ENCODE measurements at regions of chr2 and their contacts with region 1.

Region 1: DNA sequence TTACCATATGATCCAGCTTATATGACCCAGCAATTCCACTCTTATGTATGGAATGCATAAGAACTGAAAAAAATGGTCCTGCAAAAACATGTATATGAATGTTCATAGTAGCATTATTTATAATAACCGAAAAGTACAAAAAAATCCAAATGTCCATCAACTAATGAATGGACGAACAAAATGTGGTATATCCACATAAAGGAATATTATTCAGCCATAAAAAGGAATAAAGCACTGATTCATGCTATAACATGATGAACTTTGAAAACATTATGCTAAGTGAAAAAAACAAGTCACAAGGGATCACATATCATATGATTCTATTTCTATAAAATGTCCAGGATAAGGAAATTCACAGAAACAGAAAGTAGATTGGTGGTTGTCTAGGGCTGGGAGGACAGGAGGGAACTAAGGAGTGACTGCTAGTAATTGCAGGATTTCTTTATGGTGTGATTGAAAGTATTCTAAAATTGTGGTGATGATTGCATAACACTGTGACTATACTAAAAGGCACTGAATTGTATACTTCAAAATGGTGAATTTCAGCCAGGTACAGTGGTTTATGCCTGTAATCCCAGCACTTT is 10.0 kb upstream of the DIS3L2 start:
- DNase-seq: no peak
- H3K4me3 ChIP-seq: no peak overlapping the region
- CTCF ChIP-seq: no peak

Region 2: DNA sequence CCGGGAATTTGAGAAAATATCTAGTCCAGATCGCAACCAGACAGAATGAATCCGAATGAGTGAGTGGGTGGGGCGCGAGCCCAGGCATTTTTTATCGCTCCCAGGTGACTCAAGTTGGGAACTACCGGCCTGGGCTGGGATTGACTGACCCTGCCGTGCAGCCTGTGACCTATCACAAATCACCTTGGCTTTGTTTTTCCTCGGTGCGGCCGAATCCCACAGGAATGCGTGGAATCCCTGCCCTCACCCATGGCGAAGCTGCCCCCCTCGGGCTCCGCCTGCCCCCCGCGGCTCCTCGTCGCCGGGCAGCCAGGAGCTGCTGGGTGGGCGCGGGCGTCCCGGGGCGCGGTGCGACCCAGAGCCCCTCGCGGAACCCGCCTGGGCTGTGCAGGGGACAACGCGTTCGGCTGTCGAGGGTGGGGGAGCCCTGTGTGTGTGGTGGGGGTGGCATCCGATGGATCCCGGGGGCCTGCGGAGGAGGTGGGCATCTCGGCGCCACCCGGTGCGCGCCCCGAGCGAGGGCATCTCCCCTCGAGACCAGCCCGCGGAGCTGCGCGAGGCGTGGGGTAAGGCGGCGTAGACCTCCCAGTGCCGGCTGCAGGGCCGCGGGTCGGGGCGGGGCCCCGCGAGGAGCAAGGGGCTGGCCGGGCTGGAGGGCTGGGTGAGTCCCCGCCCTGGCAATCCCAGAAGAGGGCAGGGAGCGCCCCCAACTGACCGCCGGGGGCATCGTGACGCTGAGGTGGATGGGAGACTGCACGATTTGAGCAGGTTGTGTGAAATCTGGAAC is 539.5 kb before region 1 on chr2:
- in situ Hi-C with region 1: no loop called
- DNase-seq: peak; percentile 41
- H3K4me3 ChIP-seq: peak overlapping the region; percentile 55
- CTCF ChIP-seq: peak; percentile 91

Region 3: GRCh38 chr2:231883468-231883881 is 68.1 kb before region 1 on chr2:
- in situ Hi-C with region 1: loop called (anchors 5 kb)
- DNase-seq: no peak
- H3K4me3 ChIP-seq: no peak overlapping the region
- CTCF ChIP-seq: no peak

Measured in astrocyte of the cerebellum (primary cell).